Dendritic cell treated with granulocyte-macrophage colony-stimulating factor and Interleukin-4, amounts not matched to agents 40 ng/mL and 50 ng/mL, for 4 days (primary cell): ENCODE measurements at regions of chr2 and their contacts with region 1.

Region 1: DNA sequence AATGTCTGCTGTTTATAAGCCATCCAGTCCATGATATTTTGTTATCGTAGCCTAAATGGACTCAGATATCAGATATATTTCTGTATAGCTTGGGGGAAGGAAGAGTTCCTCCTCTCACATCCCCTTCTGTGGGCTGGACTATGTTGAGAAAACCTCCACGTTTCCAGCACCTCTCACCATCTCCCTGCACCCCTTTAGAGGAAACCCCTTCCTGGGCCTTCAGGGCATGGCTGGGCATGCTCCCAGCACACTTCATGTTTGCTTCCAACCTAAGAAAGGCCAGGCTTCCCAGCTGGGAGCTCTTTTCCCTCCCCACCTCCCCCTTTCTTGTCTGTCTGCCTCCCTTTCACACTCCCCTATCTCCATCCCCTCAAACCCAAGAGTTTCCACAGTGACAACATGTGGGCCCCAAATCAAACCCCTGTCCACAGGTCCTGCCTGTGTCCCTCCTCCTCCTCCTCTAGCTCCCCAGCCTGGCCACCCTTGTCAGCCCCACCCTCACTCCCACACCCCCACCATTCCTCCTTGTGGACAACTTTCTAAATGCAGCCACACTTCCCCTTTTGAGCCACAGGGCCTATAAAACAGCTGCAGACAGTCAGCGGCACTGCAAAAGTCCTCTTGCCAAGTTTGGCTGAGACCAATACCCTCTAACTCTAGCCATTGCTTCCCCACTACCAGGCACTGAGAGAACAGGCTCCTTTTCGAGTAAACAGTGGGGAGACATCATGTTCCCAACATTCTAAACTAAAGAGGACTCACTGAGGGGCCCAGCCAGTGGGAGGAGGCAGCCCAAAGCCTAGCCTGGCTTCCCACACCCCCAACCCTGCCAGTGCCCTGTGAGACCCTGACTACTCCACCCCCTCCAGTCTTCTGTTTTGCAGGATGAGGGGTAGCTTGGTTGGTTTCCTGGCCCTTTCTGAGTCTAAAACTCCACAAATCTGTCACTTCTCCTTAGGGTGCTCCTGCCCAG is 120.5 kb downstream of the ZFP36L2 start:
- H3K4me3 Mint-ChIP-seq: peak overlapping the region; percentile 63
- H3K27ac Mint-ChIP-seq: peak overlapping the region; percentile 92
- H3K4me1 Mint-ChIP-seq: peaks cover 85% of the 10 kb centered on the region
- H3K27me3 Mint-ChIP-seq: no peaks in the 10 kb centered on the region

Region 2: GRCh38 chr2:43059183-43059897 is 46.5 kb before region 1 on chr2:
- intact Hi-C with region 1: loop called (anchors 10 kb)
- H3K4me3 Mint-ChIP-seq: no peak overlapping the region
- H3K27ac Mint-ChIP-seq: peak overlapping the region; percentile 36
- H3K4me1 Mint-ChIP-seq: peaks cover 38% of the 10 kb centered on the region
- H3K27me3 Mint-ChIP-seq: peaks cover 19% of the 10 kb centered on the region

Region 3: GRCh38 chr2:43073368-43073767 is 32.5 kb before region 1 on chr2:
- intact Hi-C with region 1: loop called (anchors 5 kb)
- H3K4me3 Mint-ChIP-seq: no peak overlapping the region
- H3K27ac Mint-ChIP-seq: peak overlapping the region; percentile 33
- H3K4me1 Mint-ChIP-seq: peaks cover 58% of the 10 kb centered on the region
- H3K27me3 Mint-ChIP-seq: peaks cover 4% of the 10 kb centered on the region

Region 4: GRCh38 chr2:43251171-43251731 is 145.4 kb after region 1 on chr2:
- intact Hi-C with region 1: no loop called
- H3K4me3 Mint-ChIP-seq: no peak overlapping the region
- H3K27ac Mint-ChIP-seq: no peak overlapping the region
- H3K4me1 Mint-ChIP-seq: peaks cover 5% of the 10 kb centered on the region
- H3K27me3 Mint-ChIP-seq: no peaks in the 10 kb centered on the region